ENCODE measurements at regions of chr14 and their contacts with region 1.

Region 1: GRCh38 chr14:77565289-77565993 is 51.0 kb downstream of the SPTLC2 start:
- DNase-seq: no peak
- H3K4me3 Mint-ChIP-seq: no peak overlapping the region
- H3K27ac Mint-ChIP-seq: peak overlapping the region; percentile 28
- H3K4me1 Mint-ChIP-seq: peaks cover 8% of the 10 kb centered on the region
- H3K27me3 Mint-ChIP-seq: no peaks in the 10 kb centered on the region

Region 2: GRCh38 chr14:77469539-77469938 is 95.9 kb before region 1 on chr14:
- CTCF ChIA-PET with region 1: no interaction called
- POLR2A ChIA-PET with region 1: no interaction called
- DNase-seq: no peak
- H3K4me3 Mint-ChIP-seq: no peak overlapping the region
- H3K27ac Mint-ChIP-seq: no peak overlapping the region
- H3K4me1 Mint-ChIP-seq: no peaks in the 10 kb centered on the region
- H3K27me3 Mint-ChIP-seq: peaks cover 5% of the 10 kb centered on the region

Region 3: DNA sequence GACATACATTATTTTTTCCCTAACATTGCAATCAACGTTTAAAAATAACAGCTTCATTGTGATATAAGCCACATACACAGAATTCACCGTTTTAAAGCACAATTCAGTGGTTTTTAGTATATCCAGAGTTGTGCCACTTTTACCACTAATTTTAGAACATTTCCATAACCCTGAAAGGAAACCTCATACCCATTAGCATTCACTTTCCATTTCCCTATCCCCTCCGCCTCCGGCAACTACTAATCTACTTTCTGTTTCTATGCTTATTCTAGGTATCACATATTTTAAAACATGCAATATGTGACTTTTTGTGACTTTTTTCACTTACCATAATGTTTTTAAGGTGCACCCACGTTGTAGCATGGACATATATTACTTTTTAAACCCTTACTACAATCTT is 11.2 kb before region 1 on chr14:
- CTCF ChIA-PET with region 1: interaction called, 10 read pairs
- POLR2A ChIA-PET with region 1: no interaction called
- DNase-seq: peak; percentile 12
- H3K4me3 Mint-ChIP-seq: peak overlapping the region; percentile 29
- H3K27ac Mint-ChIP-seq: peak overlapping the region; percentile 81
- H3K4me1 Mint-ChIP-seq: peaks cover 25% of the 10 kb centered on the region
- H3K27me3 Mint-ChIP-seq: no peaks in the 10 kb centered on the region

Measured in activated CD4-positive, alpha-beta T cell treated with anti-CD3 and anti-CD28 coated beads, Interleukin-2, amount 10 ng/mL, durations not matched to agents 7 days and 5 days (primary cell).